Caco-2 (cell line): ENCODE measurements at regions of chr16 and their contacts with region 1.

Region 1: DNA sequence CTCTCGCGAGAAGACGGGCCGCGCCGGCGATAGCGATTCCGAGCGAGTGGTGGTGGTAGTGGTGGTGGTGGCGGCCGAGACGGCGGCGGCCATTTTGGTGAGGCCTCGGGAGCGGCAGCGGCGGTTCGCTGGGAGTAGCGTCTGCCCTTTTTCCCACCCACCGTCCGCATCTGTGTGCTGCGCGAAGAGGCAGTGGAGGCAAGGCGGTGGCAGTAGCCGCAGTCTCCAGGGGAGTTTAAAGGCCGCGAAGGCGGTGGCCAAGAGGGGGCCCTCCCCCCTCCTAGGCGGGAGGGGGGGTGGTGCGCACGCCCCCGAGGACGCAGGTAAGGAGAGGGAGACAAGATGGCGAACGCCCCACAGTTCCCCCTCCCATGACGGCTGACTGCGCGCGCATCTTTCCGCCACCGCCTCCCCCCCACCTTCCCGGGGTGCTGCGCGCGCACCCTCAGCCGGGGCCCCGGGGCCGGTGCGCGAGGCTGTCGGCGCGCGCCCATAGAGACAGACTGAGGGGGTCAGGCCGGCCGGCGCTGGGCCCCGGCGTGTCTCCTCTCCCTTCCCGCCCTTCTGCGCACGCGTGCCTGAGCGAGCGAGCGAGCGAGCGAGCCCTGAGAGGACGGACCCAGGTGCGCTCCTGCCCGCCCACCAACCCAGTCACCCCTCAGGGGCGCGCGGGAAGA is 694 bp upstream of the SRCAP start:
- DNase-seq: peak; percentile 98
- H3K4me3 ChIP-seq: peak overlapping the region; percentile 99
- H3K4me3 Mint-ChIP-seq: peak overlapping the region; percentile 95
- H3K27ac Mint-ChIP-seq: peak overlapping the region; percentile 98
- H3K4me1 ChIP-seq: peaks cover 7% of the 10 kb centered on the region; the same call in 1 of the 2 replicates
- H3K4me1 Mint-ChIP-seq: no peaks in the 10 kb centered on the region
- H3K27me3 ChIP-seq: no peaks in the 10 kb centered on the region
- H3K27me3 Mint-ChIP-seq: no peaks in the 10 kb centered on the region
- CTCF ChIP-seq: no peak

Region 2: GRCh38 chr16:30526823-30527635 is 171.2 kb before region 1 on chr16:
- CTCF ChIA-PET with region 1: no interaction called
- POLR2A ChIA-PET with region 1: no interaction called
- intact Hi-C with region 1: loop called (anchors 5 kb)
- DNase-seq: peak; percentile 97 to 98
- H3K4me3 ChIP-seq: peak overlapping the region; percentile 69
- H3K4me3 Mint-ChIP-seq: peak overlapping the region; percentile 82
- H3K27ac Mint-ChIP-seq: peak overlapping the region; percentile 75
- H3K4me1 ChIP-seq: peaks cover 25% of the 10 kb centered on the region
- H3K4me1 Mint-ChIP-seq: peaks cover 12% of the 10 kb centered on the region
- H3K27me3 ChIP-seq: no peaks in the 10 kb centered on the region
- H3K27me3 Mint-ChIP-seq: no peaks in the 10 kb centered on the region
- CTCF ChIP-seq: peak; percentile 36 to 43

Region 3: DNA sequence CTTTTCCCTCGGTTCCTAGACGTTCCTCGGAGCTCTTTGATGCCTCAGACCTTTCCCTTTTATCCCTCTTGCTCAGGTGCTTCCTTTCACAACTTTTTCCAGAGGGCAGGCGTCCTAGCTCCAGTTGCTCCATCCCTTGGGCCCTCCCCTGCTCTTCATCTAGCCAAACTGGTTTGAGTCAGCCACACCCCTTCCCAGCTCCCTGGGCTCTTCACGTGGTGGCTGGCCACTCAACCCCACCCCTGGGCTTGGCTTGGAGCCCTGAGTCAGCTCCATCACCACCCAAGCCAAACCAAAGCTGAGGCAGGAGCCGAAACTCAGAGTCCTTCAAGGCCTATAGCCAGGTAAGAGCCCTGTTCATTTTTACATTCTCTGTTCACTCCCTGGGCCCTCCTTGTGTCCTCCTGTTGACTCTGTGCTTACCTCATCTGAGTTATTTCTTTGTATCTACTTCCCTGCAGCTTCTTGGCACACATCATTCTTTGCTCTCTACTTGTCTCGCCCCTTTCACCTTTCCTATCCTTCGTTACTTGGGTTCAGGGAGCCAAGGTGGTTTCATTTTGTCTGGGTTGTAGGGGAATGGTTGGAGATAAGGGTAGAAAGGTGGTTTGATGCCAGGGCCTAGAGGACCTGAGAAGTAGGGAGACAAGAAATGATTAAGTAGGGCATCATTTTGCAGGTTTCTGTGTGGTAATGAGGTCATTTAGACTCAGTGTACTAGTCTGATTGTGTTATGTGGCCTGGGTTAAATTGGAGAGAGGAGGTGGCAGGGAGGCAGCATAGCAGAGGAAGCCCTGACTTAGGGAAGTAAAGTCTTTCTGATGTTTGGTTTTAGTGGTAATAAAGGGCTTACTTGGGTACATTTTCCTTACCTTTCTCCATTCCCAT is 42.3 kb after region 1 on chr16:
- CTCF ChIA-PET with region 1: no interaction called
- POLR2A ChIA-PET with region 1: no interaction called
- intact Hi-C with region 1: loop called (anchors 2 kb)
- DNase-seq: peak; percentile 92
- H3K4me3 ChIP-seq: peak overlapping the region; percentile 12; the same call in 1 of the 2 replicates
- H3K4me3 Mint-ChIP-seq: peak overlapping the region; percentile 59
- H3K27ac Mint-ChIP-seq: peak overlapping the region; percentile 90
- H3K4me1 ChIP-seq: peaks cover 27% of the 10 kb centered on the region
- H3K4me1 Mint-ChIP-seq: peaks cover 37% of the 10 kb centered on the region
- H3K27me3 ChIP-seq: no peaks in the 10 kb centered on the region
- H3K27me3 Mint-ChIP-seq: no peaks in the 10 kb centered on the region
- CTCF ChIP-seq: no peak